PC-3 (cell line): ENCODE measurements at regions of chr14 and their contacts with region 1.

Region 1: GRCh38 chr14:61461808-61462275 is 140.5 kb downstream of the PRKCH start:
- DNase-seq: peak; percentile 97
- ATAC-seq: peak; percentile 65
- H3K4me3 ChIP-seq: no peak overlapping the region
- H3K27ac ChIP-seq: peak overlapping the region; percentile 76
- H3K4me1 ChIP-seq: peaks cover 46% of the 10 kb centered on the region
- H3K27me3 ChIP-seq: no peaks in the 10 kb centered on the region
- CTCF ChIP-seq: peak; percentile 96

Region 2: DNA sequence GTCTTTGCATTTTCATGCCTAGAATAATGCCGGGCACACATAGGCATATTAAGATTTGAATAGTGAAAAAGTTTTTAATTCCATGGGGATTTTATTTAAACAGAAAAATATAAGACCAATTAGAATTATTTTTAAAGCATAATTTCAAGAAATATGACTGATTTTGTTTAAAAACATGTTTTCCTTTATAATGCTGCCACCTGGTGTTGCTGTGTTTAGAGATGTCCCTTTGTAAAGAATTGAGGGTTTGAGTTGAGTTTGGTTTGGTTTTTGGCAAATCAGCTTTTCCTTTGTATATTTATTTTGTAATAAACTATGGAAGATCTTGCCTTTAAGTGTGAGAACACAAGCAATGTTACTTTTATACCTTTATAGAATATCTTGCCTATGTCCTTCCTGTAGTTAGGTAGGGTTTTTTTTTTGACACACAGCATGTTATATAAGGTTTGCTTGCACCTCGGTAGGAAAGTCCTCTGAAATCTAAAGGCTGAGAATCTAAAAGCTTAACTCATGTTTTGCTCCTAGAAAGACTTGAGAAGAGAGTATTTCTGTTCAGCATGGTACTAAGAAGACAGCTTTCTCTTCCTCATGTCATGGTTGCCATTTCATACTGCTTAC is 269.0 kb after region 1 on chr14:
- CTCF ChIA-PET with region 1: no interaction called
- POLR2A ChIA-PET with region 1: no interaction called
- intact Hi-C with region 1: loop called (anchors 1 kb)
- DNase-seq: peak; percentile 68
- ATAC-seq: no peak
- H3K4me3 ChIP-seq: no peak overlapping the region
- H3K27ac ChIP-seq: peak overlapping the region; percentile 19
- H3K4me1 ChIP-seq: peaks cover 17% of the 10 kb centered on the region
- H3K27me3 ChIP-seq: no peaks in the 10 kb centered on the region
- CTCF ChIP-seq: peak; percentile 83

Region 3: GRCh38 chr14:62126879-62127478 is 665.1 kb after region 1 on chr14:
- CTCF ChIA-PET with region 1: no interaction called
- POLR2A ChIA-PET with region 1: no interaction called
- intact Hi-C with region 1: loop called (anchors 1 kb)
- DNase-seq: peak; percentile 85
- ATAC-seq: peak; percentile 88
- H3K4me3 ChIP-seq: no peak overlapping the region
- H3K27ac ChIP-seq: peak overlapping the region; percentile 15; the same call in 1 of the 2 replicates
- H3K4me1 ChIP-seq: peaks cover 5% of the 10 kb centered on the region; the same call in 1 of the 2 replicates
- H3K27me3 ChIP-seq: no peaks in the 10 kb centered on the region
- CTCF ChIP-seq: peak; percentile 94